ENCODE measurements at regions of chr19 and their contacts with region 1.

Region 1: GRCh38 chr19:10960314-10961072 is at the start of gene SMARCA4:
- DNase-seq: peak; percentile 88 to 96
- H3K4me3 ChIP-seq: peak within 1 kb of the TSS; percentile 98 to 100 (median 99)
- H3K27ac ChIP-seq: peak within 1 kb of the TSS; percentile 85
- H3K4me1 ChIP-seq: peaks cover 0 to 12% (median 6%) of the 10 kb centered on the region in 4 experiments; a peak in 6 of 7 replicates
- H3K27me3 ChIP-seq: no peaks in the 10 kb centered on the region
- CTCF ChIP-seq: no peak
- EP300 ChIP-seq: peak in 1 of 2 experiments; percentile 17; a peak in 1 of 3 replicates
- POLR2A ChIP-seq: peak in 1 of 2 experiments; percentile 65; a peak in 1 of 3 replicates
- RAD21 ChIP-seq: no peak
- total RNA-seq, gene SMARCA4: 263 TPM in 2 replicates

Region 2: GRCh38 chr19:10946964-10947657 is 13.4 kb before region 1 on chr19:
- CTCF ChIA-PET with region 1: interaction called, 110 read pairs
- POLR2A ChIA-PET with region 1: interaction called, 24 read pairs
- DNase-seq: no peak
- H3K4me3 ChIP-seq: no peak overlapping the region
- H3K27ac ChIP-seq: no peak overlapping the region
- H3K4me1 ChIP-seq: no peaks in the 10 kb centered on the region
- H3K27me3 ChIP-seq: no peaks in the 10 kb centered on the region
- CTCF ChIP-seq: no peak
- EP300 ChIP-seq: no peak
- POLR2A ChIP-seq: no peak
- RAD21 ChIP-seq: no peak

Region 3: GRCh38 chr19:10975374-10976130 is 15.1 kb after region 1 on chr19:
- CTCF ChIA-PET with region 1: interaction called, 5 read pairs
- POLR2A ChIA-PET with region 1: interaction called, 28 read pairs
- DNase-seq: no peak
- H3K4me3 ChIP-seq: no peak overlapping the region
- H3K27ac ChIP-seq: no peak overlapping the region
- H3K4me1 ChIP-seq: peaks cover 0 to 3% (median 0%) of the 10 kb centered on the region in 4 experiments; a peak in 3 of 7 replicates
- H3K27me3 ChIP-seq: no peaks in the 10 kb centered on the region
- CTCF ChIP-seq: no peak
- EP300 ChIP-seq: no peak
- POLR2A ChIP-seq: no peak
- RAD21 ChIP-seq: no peak

Region 4: DNA sequence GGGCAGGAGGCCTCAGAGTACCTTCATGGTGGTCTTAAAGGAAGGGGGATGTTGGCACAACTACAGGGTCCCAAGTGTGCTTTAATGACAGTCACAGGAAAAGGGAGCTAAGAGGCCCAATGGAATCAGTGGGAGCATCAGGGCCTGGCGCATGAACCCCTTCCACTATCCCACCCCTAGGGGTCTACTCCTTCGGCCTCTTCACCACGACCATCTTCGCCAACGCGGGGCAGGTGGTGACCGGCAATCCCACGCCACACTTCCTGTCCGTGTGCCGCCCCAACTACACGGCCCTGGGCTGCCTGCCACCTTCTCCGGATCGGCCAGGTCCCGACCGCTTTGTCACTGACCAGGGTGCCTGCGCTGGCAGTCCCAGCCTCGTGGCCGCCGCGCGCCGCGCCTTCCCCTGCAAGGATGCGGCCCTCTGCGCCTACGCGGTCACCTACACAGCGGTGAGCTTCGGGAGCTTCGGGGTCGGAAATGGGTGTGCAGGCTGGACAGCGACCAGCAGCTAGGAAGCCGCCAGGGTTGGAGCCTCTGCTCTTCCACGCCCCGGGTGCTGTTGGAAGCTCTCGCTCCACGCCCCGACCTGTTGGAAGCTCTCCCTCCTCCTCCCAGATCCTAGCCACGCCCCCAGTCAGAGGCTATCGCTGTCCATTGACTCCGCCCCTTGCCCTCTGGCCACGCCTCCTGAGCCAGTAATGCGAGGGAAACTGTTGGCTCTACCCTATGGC is 400.7 kb after region 1 on chr19:
- CTCF ChIA-PET with region 1: no interaction called
- POLR2A ChIA-PET with region 1: no interaction called
- DNase-seq: peak in 1 of 2 experiments; percentile 100
- H3K4me3 ChIP-seq: peak overlapping the region; percentile 46 to 62 (median 56)
- H3K27ac ChIP-seq: 0 out of 2 replicates have a peak overlapping the region, but pooled peaks have one; percentile 19
- H3K4me1 ChIP-seq: peaks cover 0 to 9% (median 5%) of the 10 kb centered on the region in 4 experiments
- H3K27me3 ChIP-seq: peaks cover 0 to 11% (median 5%) of the 10 kb centered on the region in 4 experiments; a peak in 3 of 7 replicates
- CTCF ChIP-seq: peak; percentile 19 to 44 (median 44); a peak in 3 of 4 replicates
- EP300 ChIP-seq: no peak
- POLR2A ChIP-seq: peak in 1 of 2 experiments; percentile 46; a peak in 1 of 3 replicates
- RAD21 ChIP-seq: no peak

Measured in H1 (cell line).